T-cell (primary cell): ENCODE measurements at regions of chr6 and their contacts with region 1.

Region 1: GRCh38 chr6:8102122-8102958 is at the start of gene EEF1E1:
- DNase-seq: peak; percentile 89 to 99 (median 97)
- ATAC-seq: peak; percentile 98
- H3K4me3 ChIP-seq: peak within 1 kb of the TSS; percentile 78 to 95
- H3K4me3 Mint-ChIP-seq: peak within 1 kb of the TSS; percentile 89 to 99 (median 93)
- H3K27ac ChIP-seq: peak within 1 kb of the TSS; percentile 50
- H3K27ac Mint-ChIP-seq: peak within 1 kb of the TSS; percentile 91 to 96
- H3K4me1 ChIP-seq: peaks cover 6 to 14% of the 10 kb centered on the region in 2 experiments
- H3K4me1 Mint-ChIP-seq: peaks cover 32 to 37% (median 33%) of the 10 kb centered on the region in 3 donors
- H3K27me3 ChIP-seq: no peaks in the 10 kb centered on the region
- H3K27me3 Mint-ChIP-seq: peaks cover 16 to 17% of the 10 kb centered on the region in 2 donors
- total RNA-seq, gene EEF1E1: 11.7 to 21.9 (median 19.7) TPM

Region 2: GRCh38 chr6:6960571-6961251 is 1141.6 kb before region 1 on chr6:
- CTCF ChIA-PET with region 1: no interaction called
- POLR2A ChIA-PET with region 1: no interaction called
- DNase-seq: no peak
- ATAC-seq: no peak
- H3K4me3 ChIP-seq: no peak overlapping the region
- H3K4me3 Mint-ChIP-seq: no peak overlapping the region
- H3K27ac ChIP-seq: no peak overlapping the region
- H3K27ac Mint-ChIP-seq: no peak overlapping the region
- H3K4me1 ChIP-seq: no peaks in the 10 kb centered on the region
- H3K4me1 Mint-ChIP-seq: no peaks in the 10 kb centered on the region
- H3K27me3 ChIP-seq: peaks cover 0 to 10% of the 10 kb centered on the region in 2 experiments
- H3K27me3 Mint-ChIP-seq: peaks cover 0 to 7% of the 10 kb centered on the region in 2 donors

Region 3: DNA sequence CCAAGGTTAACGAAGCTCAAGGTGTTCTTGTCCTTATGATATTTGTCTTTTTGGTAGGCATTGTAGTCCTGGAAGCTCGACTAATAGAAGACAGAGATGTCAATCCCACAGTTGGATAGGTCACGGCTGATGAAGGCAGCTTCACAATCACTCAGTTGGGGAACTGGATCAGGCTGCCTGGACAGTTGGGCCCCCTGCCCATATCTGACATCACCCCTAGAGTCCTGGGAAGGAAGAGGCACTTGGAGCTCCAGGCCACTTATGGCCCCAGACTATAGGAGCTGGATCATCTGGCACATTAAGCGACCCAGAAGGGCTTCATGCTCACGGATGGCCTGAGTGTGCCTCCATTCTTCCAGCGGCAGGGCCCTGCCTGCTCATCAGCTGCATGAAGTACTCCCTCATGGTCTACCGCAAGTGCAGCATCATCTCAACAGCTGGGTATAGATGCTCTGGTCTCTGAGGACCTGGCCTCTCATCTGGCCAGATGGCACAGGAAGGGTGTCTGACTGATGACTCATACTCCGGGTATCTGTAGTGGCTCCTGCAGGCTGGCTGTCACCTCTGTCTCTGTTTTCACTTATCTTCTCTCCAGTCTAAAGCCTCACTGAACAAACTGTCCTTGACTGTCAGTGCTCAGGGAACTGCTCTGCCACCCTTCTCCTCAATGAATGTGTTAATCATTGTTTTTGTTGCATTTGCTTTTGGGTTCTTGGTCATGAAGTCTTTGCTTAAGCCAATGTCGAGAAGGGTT is 760.2 kb before region 1 on chr6:
- CTCF ChIA-PET with region 1: no interaction called
- POLR2A ChIA-PET with region 1: no interaction called
- DNase-seq: no peak
- ATAC-seq: no peak
- H3K4me3 ChIP-seq: no peak overlapping the region
- H3K4me3 Mint-ChIP-seq: no peak overlapping the region
- H3K27ac ChIP-seq: no peak overlapping the region
- H3K27ac Mint-ChIP-seq: no peak overlapping the region
- H3K4me1 ChIP-seq: no peaks in the 10 kb centered on the region
- H3K4me1 Mint-ChIP-seq: peaks cover 0 to 11% (median 0%) of the 10 kb centered on the region in 3 donors
- H3K27me3 ChIP-seq: peaks cover 0 to 25% of the 10 kb centered on the region in 2 experiments
- H3K27me3 Mint-ChIP-seq: peaks cover 9 to 18% of the 10 kb centered on the region in 2 donors

Region 4: DNA sequence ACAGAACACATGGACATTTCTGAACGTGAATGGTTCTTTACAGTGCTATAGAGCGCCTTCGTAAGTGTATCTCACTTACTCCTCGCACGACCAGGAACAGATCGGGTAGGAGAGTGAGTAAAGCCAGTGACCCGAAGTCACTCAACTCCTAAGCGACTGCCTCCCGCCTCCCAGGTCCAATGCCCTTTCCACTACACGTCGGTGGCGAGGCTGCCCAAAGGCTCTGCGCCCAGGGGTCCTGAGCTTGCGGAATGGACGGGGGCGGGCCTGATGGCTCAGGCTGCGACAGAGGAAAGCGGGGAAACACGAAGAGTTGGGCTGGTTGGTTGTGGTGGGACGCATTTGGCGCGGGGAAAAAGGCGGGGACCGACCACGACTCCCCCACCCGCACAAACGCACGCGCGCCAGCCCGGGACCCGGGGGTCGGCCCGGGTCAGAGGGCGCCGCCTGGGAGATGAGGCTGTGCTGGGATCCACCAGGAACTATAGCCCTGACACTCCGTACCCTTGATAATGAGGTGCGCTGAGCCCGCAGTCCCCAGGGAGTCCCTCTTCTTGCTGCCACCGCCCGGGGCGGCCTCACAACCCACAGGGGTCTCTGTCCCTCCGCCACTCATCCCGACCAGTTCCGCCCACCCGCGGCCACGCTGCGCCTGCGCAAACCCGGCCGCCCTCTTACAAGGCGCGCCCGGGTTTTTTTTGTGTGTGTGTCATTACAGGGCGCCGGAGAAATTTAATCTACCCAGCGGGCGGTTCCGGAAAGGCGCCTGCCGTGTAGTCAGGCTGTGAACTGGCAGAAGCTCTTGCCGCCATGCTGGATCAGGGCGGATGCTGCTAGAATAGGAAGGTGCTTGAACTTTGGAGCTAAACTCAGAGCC is 38.3 kb before region 1 on chr6 and contains the start of gene BLOC1S5:
- CTCF ChIA-PET with region 1: interaction called, 4 to 33 read pairs
- POLR2A ChIA-PET with region 1: interaction called in 1 of 2 experiments, 21 read pairs
- DNase-seq: peak; percentile 87 to 98 (median 96)
- ATAC-seq: peak; percentile 94 to 96 (median 95)
- H3K4me3 ChIP-seq: peak within 1 kb of the TSS; percentile 87 to 93
- H3K4me3 Mint-ChIP-seq: peak within 1 kb of the TSS; percentile 86 to 96 (median 93)
- H3K27ac ChIP-seq: peak within 1 kb of the TSS; percentile 84
- H3K27ac Mint-ChIP-seq: peak within 1 kb of the TSS; percentile 92 to 94
- H3K4me1 ChIP-seq: peaks cover 3 to 20% of the 10 kb centered on the region in 2 experiments
- H3K4me1 Mint-ChIP-seq: peaks cover 29 to 39% (median 32%) of the 10 kb centered on the region in 3 donors
- H3K27me3 ChIP-seq: no peaks in the 10 kb centered on the region
- H3K27me3 Mint-ChIP-seq: no peaks in the 10 kb centered on the region
- total RNA-seq, gene BLOC1S5: 12.3 to 26.9 (median 18.1) TPM

Region 5: GRCh38 chr6:8074213-8074612 is 28.1 kb before region 1 on chr6:
- CTCF ChIA-PET with region 1: interaction called in 1 of 2 experiments, 12 read pairs
- POLR2A ChIA-PET with region 1: interaction called in 1 of 2 experiments, 6 read pairs
- DNase-seq: no peak
- ATAC-seq: no peak
- H3K4me3 ChIP-seq: no peak overlapping the region
- H3K4me3 Mint-ChIP-seq: no peak overlapping the region
- H3K27ac ChIP-seq: no peak overlapping the region
- H3K27ac Mint-ChIP-seq: peak overlapping the region in 1 of 2 donors; percentile 49
- H3K4me1 ChIP-seq: no peaks in the 10 kb centered on the region
- H3K4me1 Mint-ChIP-seq: peaks cover 12 to 17% (median 13%) of the 10 kb centered on the region in 3 donors
- H3K27me3 ChIP-seq: no peaks in the 10 kb centered on the region
- H3K27me3 Mint-ChIP-seq: no peaks in the 10 kb centered on the region

Region 6: GRCh38 chr6:8085053-8085511 is 17.3 kb before region 1 on chr6:
- CTCF ChIA-PET with region 1: no interaction called
- POLR2A ChIA-PET with region 1: no interaction called
- DNase-seq: no peak
- ATAC-seq: no peak
- H3K4me3 ChIP-seq: no peak overlapping the region
- H3K4me3 Mint-ChIP-seq: no peak overlapping the region
- H3K27ac ChIP-seq: no peak overlapping the region
- H3K27ac Mint-ChIP-seq: no peak overlapping the region
- H3K4me1 ChIP-seq: no peaks in the 10 kb centered on the region
- H3K4me1 Mint-ChIP-seq: peaks cover 2 to 8% (median 2%) of the 10 kb centered on the region in 3 donors
- H3K27me3 ChIP-seq: no peaks in the 10 kb centered on the region
- H3K27me3 Mint-ChIP-seq: no peaks in the 10 kb centered on the region

Region 7: GRCh38 chr6:8131256-8131897 is 29.0 kb after region 1 on chr6:
- CTCF ChIA-PET with region 1: interaction called in 1 of 2 experiments, 10 read pairs
- POLR2A ChIA-PET with region 1: interaction called in 1 of 2 experiments, 4 read pairs
- DNase-seq: peak in 21 of 35 experiments; percentile 2 to 57 (median 15)
- ATAC-seq: peak; percentile 19 to 48 (median 46)
- H3K4me3 ChIP-seq: no peak overlapping the region
- H3K4me3 Mint-ChIP-seq: no peak overlapping the region
- H3K27ac ChIP-seq: no peak overlapping the region
- H3K27ac Mint-ChIP-seq: no peak overlapping the region
- H3K4me1 ChIP-seq: no peaks in the 10 kb centered on the region
- H3K4me1 Mint-ChIP-seq: peaks cover 0 to 7% (median 0%) of the 10 kb centered on the region in 3 donors
- H3K27me3 ChIP-seq: peaks cover 3 to 4% of the 10 kb centered on the region in 2 experiments
- H3K27me3 Mint-ChIP-seq: peaks cover 17 to 26% of the 10 kb centered on the region in 2 donors

Region 8: DNA sequence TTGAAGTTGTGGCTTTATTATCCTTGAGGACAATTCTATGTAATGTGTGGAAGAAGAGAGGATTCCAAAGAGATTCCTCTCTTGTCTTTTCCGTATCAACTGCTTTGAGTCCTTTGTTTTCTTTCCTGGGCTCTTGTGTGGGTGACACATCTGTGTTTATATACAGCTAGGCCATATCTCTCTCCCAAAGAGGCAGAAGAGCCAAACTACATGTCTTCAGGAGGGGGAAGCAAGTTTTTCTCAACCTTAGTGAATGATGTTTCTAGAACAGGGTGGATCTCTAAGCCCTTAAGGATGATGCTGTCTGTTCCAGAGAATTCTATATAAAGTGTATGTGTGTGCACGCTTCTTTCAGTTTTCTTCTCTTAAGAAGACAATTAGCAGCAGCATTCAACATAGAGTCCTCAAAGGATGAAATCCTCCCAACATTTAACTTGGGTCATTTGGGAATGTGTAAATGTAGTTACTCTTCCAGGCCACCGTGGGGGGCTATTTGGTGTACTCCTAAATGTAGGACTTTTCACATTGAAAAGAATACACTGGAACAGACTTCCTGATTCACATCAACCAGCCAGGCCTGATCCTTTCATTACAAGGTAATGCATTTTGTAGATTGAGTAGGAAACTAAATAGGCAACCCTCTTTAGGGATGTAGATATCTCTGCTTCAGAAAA is 92.8 kb after region 1 on chr6:
- CTCF ChIA-PET with region 1: no interaction called
- POLR2A ChIA-PET with region 1: no interaction called
- DNase-seq: no peak
- ATAC-seq: no peak
- H3K4me3 ChIP-seq: no peak overlapping the region
- H3K4me3 Mint-ChIP-seq: no peak overlapping the region
- H3K27ac ChIP-seq: no peak overlapping the region
- H3K27ac Mint-ChIP-seq: no peak overlapping the region
- H3K4me1 ChIP-seq: no peaks in the 10 kb centered on the region
- H3K4me1 Mint-ChIP-seq: no peaks in the 10 kb centered on the region
- H3K27me3 ChIP-seq: no peaks in the 10 kb centered on the region
- H3K27me3 Mint-ChIP-seq: peaks cover 8 to 29% of the 10 kb centered on the region in 2 donors